Pancreas (tissue), 10 donors: ENCODE measurements at regions of chr4 and their contacts with region 1.

Region 1: GRCh38 chr4:72701987-72702819 is 133.2 kb upstream of the ADAMTS3 start:
- DNase-seq: peak in 3 of 6 donors; percentile 9 to 22 (median 19)
- ATAC-seq: peak in 3 of 4 donors; percentile 63 to 77 (median 72)
- H3K4me3 ChIP-seq: peak overlapping the region in 3 of 4 donors; percentile 4 to 38 (median 9)
- H3K27ac ChIP-seq: no peak overlapping the region
- H3K4me1 ChIP-seq: no peaks in the 10 kb centered on the region
- H3K27me3 ChIP-seq: no peaks in the 10 kb centered on the region
- CTCF ChIP-seq: peak in 1 of 4 donors; percentile 42

Region 2: GRCh38 chr4:73019462-73020047 is 317.4 kb after region 1 on chr4:
- intact Hi-C with region 1: loop called in 1 of 3 experiments (anchors 10 kb)
- DNase-seq: no peak
- ATAC-seq: peak in 3 of 4 donors; percentile 50 to 59 (median 51)
- H3K4me3 ChIP-seq: no peak overlapping the region
- H3K27ac ChIP-seq: no peak overlapping the region
- H3K4me1 ChIP-seq: no peaks in the 10 kb centered on the region
- H3K27me3 ChIP-seq: no peaks in the 10 kb centered on the region
- CTCF ChIP-seq: peak; percentile 20 to 62 (median 40)

Region 3: DNA sequence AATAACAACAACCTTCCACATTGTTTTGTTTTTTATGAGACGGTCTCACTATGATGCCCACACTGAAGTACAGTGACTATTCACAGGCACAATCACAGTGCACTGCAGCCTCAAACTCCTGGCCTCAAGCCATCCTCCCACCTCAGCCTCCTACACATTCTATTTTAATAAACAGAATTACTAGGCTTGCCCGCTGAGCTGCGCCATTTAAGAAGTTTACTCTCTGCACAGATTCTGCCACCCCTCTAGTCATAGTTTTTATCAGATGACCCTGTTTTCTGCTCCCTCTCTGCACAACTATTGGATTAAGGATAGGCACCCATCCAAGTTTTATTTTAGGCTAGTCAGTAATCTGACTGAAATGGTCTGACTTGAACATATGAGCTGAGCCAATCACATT is 378.6 kb after region 1 on chr4:
- intact Hi-C with region 1: no loop called
- DNase-seq: no peak
- ATAC-seq: no peak
- H3K4me3 ChIP-seq: no peak overlapping the region
- H3K27ac ChIP-seq: no peak overlapping the region
- H3K4me1 ChIP-seq: no peaks in the 10 kb centered on the region
- H3K27me3 ChIP-seq: no peaks in the 10 kb centered on the region
- CTCF ChIP-seq: no peak